ENCODE measurements at regions of chr13 and their contacts with region 1.

Region 1: DNA sequence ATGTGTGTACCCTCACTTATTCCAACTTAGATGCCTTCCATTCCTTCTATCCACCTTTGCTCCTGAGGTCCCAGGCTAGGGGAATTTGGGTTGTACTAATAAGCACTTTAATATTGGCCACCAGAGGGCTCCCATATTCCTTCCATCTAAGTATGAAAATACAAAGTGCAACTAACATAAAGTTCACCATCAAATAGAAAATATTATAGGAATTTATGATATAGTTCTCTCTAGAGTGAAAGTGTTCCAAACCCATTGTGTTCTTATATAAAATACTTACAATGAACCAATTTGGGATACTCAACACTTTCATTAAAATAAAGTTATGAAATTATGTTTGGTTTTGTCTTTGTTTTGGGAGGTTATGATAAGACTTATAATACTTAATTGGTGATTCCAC is 62.3 kb downstream of the ITGBL1 start:
- DNase-seq: no peak
- H3K4me3 Mint-ChIP-seq: no peak overlapping the region
- H3K27ac Mint-ChIP-seq: no peak overlapping the region
- H3K4me1 Mint-ChIP-seq: peaks cover 6% of the 10 kb centered on the region
- H3K27me3 Mint-ChIP-seq: peaks cover 18% of the 10 kb centered on the region

Region 2: DNA sequence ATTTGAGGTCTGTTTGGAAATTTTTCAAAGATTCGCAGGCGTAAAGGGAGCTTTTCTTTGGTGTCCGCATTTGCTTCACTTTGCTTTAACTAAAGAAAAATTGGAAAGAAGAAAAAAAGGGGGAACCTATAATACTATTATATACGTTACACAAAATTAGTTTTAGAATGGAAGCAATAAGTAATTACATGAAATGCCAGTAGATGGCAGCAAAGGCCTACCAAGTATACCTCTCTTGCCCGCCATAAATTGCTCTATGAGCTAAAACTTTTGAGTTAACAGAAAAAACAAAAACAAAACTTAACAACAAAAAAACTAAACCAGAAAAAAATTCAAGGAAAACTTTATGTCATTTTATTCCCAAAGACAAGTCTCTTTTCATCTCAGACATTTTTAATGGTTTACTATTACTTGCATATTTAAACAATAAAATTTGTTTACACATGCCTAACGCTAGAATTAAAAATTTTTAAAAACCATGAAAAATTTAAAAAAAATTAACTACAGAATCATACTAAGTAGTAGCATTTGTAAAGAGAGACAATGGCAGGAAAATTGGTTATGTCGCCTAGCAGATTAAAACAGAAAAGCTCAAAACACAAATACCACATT is 369.9 kb before region 1 on chr13:
- intact Hi-C with region 1: loop called (anchors 2 kb)
- DNase-seq: no peak
- H3K4me3 Mint-ChIP-seq: no peak overlapping the region
- H3K27ac Mint-ChIP-seq: no peak overlapping the region
- H3K4me1 Mint-ChIP-seq: no peaks in the 10 kb centered on the region
- H3K27me3 Mint-ChIP-seq: peaks cover 5% of the 10 kb centered on the region